ENCODE measurements at regions of chr2 and their contacts with region 1.

Region 1: DNA sequence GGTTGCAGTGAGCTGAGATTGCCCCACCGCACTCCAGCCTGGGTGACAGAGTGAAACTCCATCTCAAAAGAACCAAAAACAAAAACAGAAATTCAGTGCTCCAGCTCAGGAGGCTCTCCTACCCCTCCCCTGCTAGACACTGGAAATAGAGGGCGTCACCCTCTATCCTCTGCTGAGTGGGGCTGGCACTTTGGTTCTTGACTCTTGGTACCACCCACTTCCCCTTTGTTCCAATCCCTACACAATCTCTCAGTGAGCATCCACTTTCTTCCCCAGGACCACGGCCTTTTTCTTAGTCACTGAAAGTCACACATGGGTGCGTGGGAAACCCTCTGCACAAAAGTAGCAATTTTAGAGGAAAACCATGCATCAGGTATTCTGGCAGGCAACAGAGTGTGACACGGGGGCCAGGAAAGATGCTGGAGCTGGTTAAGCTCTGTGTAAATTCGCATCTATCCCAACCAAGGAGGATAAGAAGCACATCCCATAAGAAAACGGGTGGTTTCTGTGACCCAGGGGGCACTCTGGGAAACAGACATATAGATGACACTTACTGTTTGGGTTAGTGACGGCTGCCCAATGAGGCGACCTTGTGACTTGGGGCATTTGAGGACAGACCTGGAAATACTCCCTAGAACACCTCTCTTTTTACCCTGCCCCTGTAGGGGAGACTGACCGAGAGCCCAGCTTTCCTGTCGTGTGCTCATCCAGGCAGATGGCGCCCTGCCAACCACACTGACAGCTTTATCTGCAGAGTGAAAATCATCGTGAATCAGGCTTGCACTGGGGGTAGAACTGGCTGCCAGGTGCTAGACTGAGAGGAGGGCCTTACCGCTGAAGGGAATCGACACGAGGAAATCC is 7.7 kb downstream of the HJURP start:
- DNase-seq: no peak
- ATAC-seq: no peak

Region 2: DNA sequence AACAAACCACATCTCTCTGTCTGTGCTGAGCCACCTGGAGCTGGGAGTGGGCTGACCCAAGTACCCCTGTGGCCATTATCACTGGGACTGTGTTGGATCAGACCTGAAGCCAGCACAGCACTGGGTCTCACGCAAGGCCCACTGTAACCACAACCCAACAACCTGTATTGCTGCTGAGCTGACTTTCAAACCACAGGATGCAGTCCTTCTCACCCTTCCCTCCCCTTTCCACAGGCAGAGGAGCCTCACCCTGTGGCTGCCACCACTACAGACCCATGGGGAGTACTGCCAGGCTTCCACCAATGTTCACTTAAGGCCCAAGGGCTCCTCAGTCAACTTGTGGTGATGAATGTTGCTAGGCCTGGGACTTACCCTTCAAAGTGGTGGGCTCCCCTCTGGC is 1749.4 kb before region 1 on chr2:
- intact Hi-C with region 1: loop called (anchors 5 kb)
- DNase-seq: no peak
- ATAC-seq: no peak

Measured in sciatic nerve (tissue), 2 donors.